CD4-positive, alpha-beta memory T cell (primary cell): ENCODE measurements at regions of chr16 and their contacts with region 1.

Region 1: DNA sequence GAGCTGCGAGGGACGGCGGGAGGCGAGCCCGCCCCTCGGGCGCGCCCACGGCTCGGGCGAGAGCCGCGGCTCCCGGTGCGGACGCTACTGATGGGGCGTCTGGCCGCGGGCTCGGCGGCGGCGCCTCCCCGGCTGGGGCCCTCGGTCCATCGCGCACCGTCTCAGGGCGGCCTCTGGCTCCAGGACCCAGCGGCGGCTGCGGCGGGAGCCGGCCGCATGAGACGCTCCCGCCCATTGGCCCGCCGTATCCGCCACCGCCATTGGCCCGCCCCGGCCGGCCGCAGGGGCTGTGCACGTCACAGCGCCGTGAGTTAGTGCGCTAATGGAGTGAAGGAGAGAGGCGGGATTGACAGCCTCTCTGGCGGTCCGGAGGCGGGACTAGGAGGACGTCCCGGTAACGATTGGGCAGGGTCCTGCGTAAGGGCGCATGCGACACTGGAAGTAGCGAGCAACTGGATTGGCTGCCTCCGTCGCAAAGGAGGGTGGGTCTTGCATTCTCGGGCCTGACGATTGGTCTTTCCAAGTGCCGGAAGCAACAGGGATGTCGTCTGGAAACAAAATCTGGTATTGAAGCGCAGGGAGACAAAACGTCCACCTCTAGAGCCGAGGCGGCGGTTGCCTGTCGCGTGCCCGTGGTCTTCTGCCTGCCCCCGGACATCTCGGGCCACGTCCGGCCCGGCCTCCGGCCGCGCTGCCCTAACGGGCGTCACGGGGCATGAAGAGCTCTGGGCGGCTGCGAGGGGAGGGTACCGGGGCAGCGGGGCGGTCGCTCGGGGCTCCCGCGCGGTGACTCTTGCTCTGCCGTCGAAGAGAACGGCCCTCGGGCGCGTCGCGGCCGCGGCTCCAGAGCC is at the start of gene ANKRD11:
- DNase-seq: peak; percentile 99 to 100 (median 100)
- H3K4me3 ChIP-seq: peak within 1 kb of the TSS; percentile 64 to 72
- H3K4me3 Mint-ChIP-seq: peak within 1 kb of the TSS; percentile 88 to 97 (median 94)
- H3K27ac ChIP-seq: peak within 1 kb of the TSS; percentile 95
- H3K27ac Mint-ChIP-seq: peak within 1 kb of the TSS; percentile 96 to 99 (median 97)
- H3K4me1 ChIP-seq: peaks cover 57% of the 10 kb centered on the region
- H3K4me1 Mint-ChIP-seq: peaks cover 35 to 77% (median 57%) of the 10 kb centered on the region in 4 donors
- H3K27me3 ChIP-seq: no peaks in the 10 kb centered on the region
- H3K27me3 Mint-ChIP-seq: no peaks in the 10 kb centered on the region
- total RNA-seq, gene ANKRD11: 229 to 246 TPM

Region 2: GRCh38 chr16:89261691-89262563 is 228.7 kb before region 1 on chr16:
- CTCF ChIA-PET with region 1: no interaction called
- POLR2A ChIA-PET with region 1: no interaction called
- intact Hi-C with region 1: no loop called
- DNase-seq: no peak
- H3K4me3 ChIP-seq: no peak overlapping the region
- H3K4me3 Mint-ChIP-seq: no peak overlapping the region
- H3K27ac ChIP-seq: no peak overlapping the region
- H3K27ac Mint-ChIP-seq: peak overlapping the region in 2 of 7 donors; percentile 13 to 36
- H3K4me1 ChIP-seq: peaks cover 11% of the 10 kb centered on the region
- H3K4me1 Mint-ChIP-seq: peaks cover 4 to 19% (median 13%) of the 10 kb centered on the region in 4 donors
- H3K27me3 ChIP-seq: peaks cover 4% of the 10 kb centered on the region
- H3K27me3 Mint-ChIP-seq: peaks cover 4 to 7% of the 10 kb centered on the region in 2 donors

Region 3: GRCh38 chr16:89332902-89333245 is 157.7 kb before region 1 on chr16:
- CTCF ChIA-PET with region 1: no interaction called
- POLR2A ChIA-PET with region 1: interaction called, 4 read pairs
- intact Hi-C with region 1: loop called (anchors 1 kb)
- DNase-seq: peak in 1 of 5 donors; percentile 28
- H3K4me3 ChIP-seq: no peak overlapping the region
- H3K4me3 Mint-ChIP-seq: no peak overlapping the region
- H3K27ac ChIP-seq: no peak overlapping the region
- H3K27ac Mint-ChIP-seq: peak overlapping the region in 2 of 7 donors; percentile 36 to 87
- H3K4me1 ChIP-seq: peaks cover 85% of the 10 kb centered on the region
- H3K4me1 Mint-ChIP-seq: peaks cover 36 to 86% (median 67%) of the 10 kb centered on the region in 4 donors
- H3K27me3 ChIP-seq: no peaks in the 10 kb centered on the region
- H3K27me3 Mint-ChIP-seq: no peaks in the 10 kb centered on the region

Region 4: GRCh38 chr16:89388536-89388935 is 102.1 kb before region 1 on chr16:
- CTCF ChIA-PET with region 1: no interaction called
- POLR2A ChIA-PET with region 1: no interaction called
- intact Hi-C with region 1: loop called (anchors 2 kb)
- DNase-seq: no peak
- H3K4me3 ChIP-seq: no peak overlapping the region
- H3K4me3 Mint-ChIP-seq: peak overlapping the region in 7 of 8 donors; percentile 49 to 73 (median 62)
- H3K27ac ChIP-seq: no peak overlapping the region
- H3K27ac Mint-ChIP-seq: peak overlapping the region; percentile 54 to 94 (median 86)
- H3K4me1 ChIP-seq: peaks cover 60% of the 10 kb centered on the region
- H3K4me1 Mint-ChIP-seq: peaks cover 49 to 82% (median 64%) of the 10 kb centered on the region in 4 donors
- H3K27me3 ChIP-seq: no peaks in the 10 kb centered on the region
- H3K27me3 Mint-ChIP-seq: no peaks in the 10 kb centered on the region

Region 5: DNA sequence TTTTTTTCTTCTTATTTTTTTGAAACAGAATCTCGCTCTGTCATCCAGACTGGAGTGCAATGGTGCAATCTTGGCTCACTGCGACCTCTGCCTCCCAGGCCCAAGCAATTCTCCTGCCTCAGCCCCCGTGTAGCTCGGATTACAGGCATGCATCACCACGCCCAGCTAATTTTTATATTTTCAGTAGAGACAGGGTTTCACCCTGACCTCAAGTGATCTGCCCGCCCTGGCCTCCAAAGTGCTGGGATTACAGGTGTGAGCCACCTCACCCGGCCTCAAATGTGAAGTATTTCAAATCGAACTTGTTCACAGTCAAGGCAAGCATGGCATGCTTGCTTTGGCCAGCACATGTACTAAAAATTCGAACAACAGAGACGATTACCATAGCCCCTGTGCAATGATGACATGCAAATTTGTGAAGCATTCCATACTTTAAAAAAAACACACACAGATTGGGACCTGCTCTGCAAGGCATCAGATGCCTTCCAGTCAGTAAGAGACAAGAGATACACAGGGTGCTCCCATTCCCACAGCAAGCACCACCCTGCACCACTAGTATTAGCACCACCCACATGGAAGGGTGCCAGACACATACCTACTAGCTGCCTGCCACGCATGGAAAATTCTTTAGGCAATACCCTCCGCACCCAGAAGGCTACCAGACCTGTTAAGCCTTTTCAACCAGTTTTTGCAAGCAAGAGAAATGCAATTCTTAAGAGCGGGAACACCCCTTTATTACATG is 47.5 kb before region 1 on chr16:
- CTCF ChIA-PET with region 1: no interaction called
- POLR2A ChIA-PET with region 1: interaction called, 14 read pairs
- intact Hi-C with region 1: loop called (anchors 2 kb)
- DNase-seq: peak in 1 of 5 donors; percentile 58
- H3K4me3 ChIP-seq: no peak overlapping the region
- H3K4me3 Mint-ChIP-seq: peak overlapping the region in 7 of 8 donors; percentile 32 to 70 (median 67)
- H3K27ac ChIP-seq: no peak overlapping the region
- H3K27ac Mint-ChIP-seq: peak overlapping the region; percentile 67 to 91 (median 84)
- H3K4me1 ChIP-seq: peaks cover 100% of the 10 kb centered on the region
- H3K4me1 Mint-ChIP-seq: peaks cover 0 to 100% (median 81%) of the 10 kb centered on the region in 4 donors
- H3K27me3 ChIP-seq: no peaks in the 10 kb centered on the region
- H3K27me3 Mint-ChIP-seq: no peaks in the 10 kb centered on the region

Region 6: GRCh38 chr16:89560378-89561141 is 69.9 kb after region 1 on chr16 and contains the start of gene RPL13:
- CTCF ChIA-PET with region 1: no interaction called
- POLR2A ChIA-PET with region 1: interaction called, 7 read pairs
- intact Hi-C with region 1: loop called (anchors 1 kb)
- DNase-seq: peak; percentile 91 to 94 (median 93)
- H3K4me3 ChIP-seq: peak within 1 kb of the TSS; percentile 73 to 85
- H3K4me3 Mint-ChIP-seq: peak within 1 kb of the TSS; percentile 95 to 99 (median 98)
- H3K27ac ChIP-seq: peak within 1 kb of the TSS; percentile 88
- H3K27ac Mint-ChIP-seq: peak within 1 kb of the TSS; percentile 97 to 99 (median 98)
- H3K4me1 ChIP-seq: peaks cover 58% of the 10 kb centered on the region
- H3K4me1 Mint-ChIP-seq: peaks cover 32 to 66% (median 50%) of the 10 kb centered on the region in 4 donors
- H3K27me3 ChIP-seq: no peaks in the 10 kb centered on the region
- H3K27me3 Mint-ChIP-seq: no peaks in the 10 kb centered on the region
- total RNA-seq, gene RPL13: 4,825 to 5,043 TPM